ENCODE measurements at regions of chr9 and their contacts with region 1.

Region 1: DNA sequence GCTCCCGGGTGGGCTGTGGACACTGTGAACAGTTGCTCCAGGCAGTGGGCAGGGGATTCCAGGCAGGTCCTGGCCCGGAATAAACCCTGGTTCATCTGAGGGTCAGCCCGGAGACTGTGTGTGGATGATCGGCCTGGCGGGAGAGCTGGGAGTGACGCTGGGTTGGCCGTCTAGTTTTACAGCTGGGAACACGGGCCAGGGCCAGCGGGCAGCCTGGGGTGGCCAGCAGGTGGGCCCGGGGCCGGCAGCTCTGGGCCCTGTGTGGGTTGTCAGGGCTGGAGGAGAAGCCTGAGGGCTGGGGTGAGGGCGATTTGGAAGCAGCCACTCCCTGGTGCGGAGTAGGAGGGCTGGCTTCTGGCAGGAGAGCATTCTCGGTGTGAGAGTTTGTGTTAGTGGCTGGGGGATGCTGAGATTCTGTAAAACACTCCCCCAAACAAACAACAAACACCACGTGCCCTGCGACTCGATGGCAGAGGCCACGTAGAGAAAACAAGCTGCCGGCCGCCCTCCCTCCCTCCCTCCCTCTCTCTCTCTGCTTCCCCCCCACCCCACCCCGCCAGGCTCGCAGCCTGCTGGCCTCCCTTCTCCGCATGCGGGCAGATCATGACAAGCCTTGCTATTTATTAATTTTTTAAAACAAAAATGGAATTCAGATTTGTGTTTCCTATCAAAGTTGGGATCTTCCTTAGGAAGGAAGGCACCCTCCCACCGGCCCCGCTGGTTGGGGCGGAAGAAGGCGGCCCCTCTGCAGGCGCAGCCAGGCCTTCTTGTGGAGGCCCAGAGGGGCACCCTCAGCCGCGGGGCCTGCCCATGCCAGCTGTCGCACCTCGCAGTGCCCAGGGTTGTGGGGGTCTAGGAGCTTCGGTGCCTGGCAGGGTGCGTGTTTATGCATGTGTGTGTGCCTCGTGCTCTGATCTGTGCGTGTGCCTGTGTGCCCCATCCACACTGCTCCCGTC is 49.5 kb downstream of the RXRA start:
- DNase-seq: peak; percentile 85 to 96
- ATAC-seq: peak; percentile 31 to 34
- H3K4me3 ChIP-seq: peak overlapping the region; percentile 35 to 56 (median 47)
- H3K27ac ChIP-seq: peak overlapping the region; percentile 90 to 100 (median 100)
- H3K4me1 ChIP-seq: peaks cover 97 to 100% of the 10 kb centered on the region in 2 donors
- H3K27me3 ChIP-seq: no peaks in the 10 kb centered on the region
- CTCF ChIP-seq: peak in 2 of 5 experiments; percentile 28 to 36
- POLR2A ChIP-seq: peak in 1 of 2 donors; percentile 74

Region 2: GRCh38 chr9:133979273-133979920 is 396.3 kb before region 1 on chr9:
- in situ Hi-C with region 1: no loop called
- intact Hi-C with region 1: no loop called
- DNase-seq: no peak
- ATAC-seq: peak in 1 of 2 donors; percentile 58
- H3K4me3 ChIP-seq: peak overlapping the region; percentile 25 to 41 (median 32)
- H3K27ac ChIP-seq: peak overlapping the region in 2 of 4 donors; percentile 43 to 47
- H3K4me1 ChIP-seq: peaks cover 0 to 12% of the 10 kb centered on the region in 2 donors
- H3K27me3 ChIP-seq: peaks cover 0 to 13% (median 4%) of the 10 kb centered on the region in 3 donors
- CTCF ChIP-seq: no peak
- POLR2A ChIP-seq: no peak

Region 3: GRCh38 chr9:134128727-134129679 is 246.7 kb before region 1 on chr9:
- in situ Hi-C with region 1: no loop called
- intact Hi-C with region 1: no loop called
- DNase-seq: no peak
- ATAC-seq: peak in 1 of 2 donors; percentile 50
- H3K4me3 ChIP-seq: no peak overlapping the region
- H3K27ac ChIP-seq: peak overlapping the region; percentile 44 to 70 (median 66)
- H3K4me1 ChIP-seq: peaks cover 4 to 14% of the 10 kb centered on the region in 2 donors
- H3K27me3 ChIP-seq: no peaks in the 10 kb centered on the region
- CTCF ChIP-seq: no peak
- POLR2A ChIP-seq: no peak

Region 4: DNA sequence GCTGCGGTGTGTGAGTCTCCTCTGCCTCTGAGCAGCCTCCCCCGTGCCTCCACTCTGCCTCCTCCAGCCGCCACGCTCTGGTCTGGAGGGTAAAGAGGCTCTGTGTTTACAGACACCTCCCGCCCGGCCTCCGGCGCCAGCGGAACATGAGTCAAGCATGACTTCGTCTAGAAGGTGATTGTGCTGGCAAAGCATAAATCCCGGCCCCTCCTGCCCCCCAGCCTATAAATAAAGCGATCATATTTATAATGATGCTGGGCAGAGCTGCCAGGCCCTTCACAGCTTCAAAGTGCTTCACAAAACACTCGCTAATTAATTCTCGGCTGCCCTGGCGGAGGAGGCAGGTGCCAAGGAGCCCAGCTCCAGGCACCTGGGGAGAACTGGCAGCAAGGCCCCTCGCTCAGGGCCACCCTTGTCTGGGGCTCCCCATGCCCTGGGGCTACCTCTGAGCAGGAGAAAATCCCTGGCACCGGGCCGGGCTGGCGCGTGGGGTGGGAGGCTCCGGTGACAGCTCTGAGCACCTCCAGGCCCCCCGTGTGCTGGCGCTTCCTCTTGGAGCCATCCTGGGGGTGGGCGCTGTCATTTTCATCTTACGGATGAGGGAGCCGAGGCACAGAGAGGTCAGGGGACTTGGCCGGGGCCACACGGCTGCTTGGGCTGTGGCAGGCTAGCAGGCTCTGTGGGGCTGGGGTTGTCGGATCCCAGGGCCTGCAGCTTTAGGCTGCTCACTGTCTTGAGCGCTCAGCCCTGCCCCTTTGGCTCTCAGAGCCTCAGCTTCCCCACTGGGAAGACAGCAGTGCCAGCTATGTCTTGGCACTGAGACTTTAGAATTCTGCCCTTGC is 38.4 kb after region 1 on chr9:
- in situ Hi-C with region 1: no loop called
- intact Hi-C with region 1: loop called (anchors 1 kb)
- DNase-seq: peak; percentile 86 to 94
- ATAC-seq: peak; percentile 43 to 48
- H3K4me3 ChIP-seq: peak overlapping the region in 2 of 4 donors; percentile 19 to 23
- H3K27ac ChIP-seq: peak overlapping the region; percentile 90 to 98 (median 98)
- H3K4me1 ChIP-seq: peaks cover 81 to 87% of the 10 kb centered on the region in 2 donors
- H3K27me3 ChIP-seq: no peaks in the 10 kb centered on the region
- CTCF ChIP-seq: no peak
- POLR2A ChIP-seq: peak in 1 of 2 donors; percentile 92

Region 5: GRCh38 chr9:134434894-134435506 is 59.3 kb after region 1 on chr9:
- in situ Hi-C with region 1: loop called in 1 of 4 experiments (anchors 5 kb)
- intact Hi-C with region 1: loop called (anchors 2 kb)
- DNase-seq: peak; percentile 95 to 96
- ATAC-seq: peak; percentile 71 to 73
- H3K4me3 ChIP-seq: peak overlapping the region; percentile 10 to 30 (median 22)
- H3K27ac ChIP-seq: peak overlapping the region; percentile 92 to 97 (median 94)
- H3K4me1 ChIP-seq: peaks cover 87 to 88% of the 10 kb centered on the region in 2 donors
- H3K27me3 ChIP-seq: no peaks in the 10 kb centered on the region
- CTCF ChIP-seq: no peak
- POLR2A ChIP-seq: no peak